Uterus (tissue), 4 donors: ENCODE measurements at regions of chr18 and their contacts with region 1.

Region 1: DNA sequence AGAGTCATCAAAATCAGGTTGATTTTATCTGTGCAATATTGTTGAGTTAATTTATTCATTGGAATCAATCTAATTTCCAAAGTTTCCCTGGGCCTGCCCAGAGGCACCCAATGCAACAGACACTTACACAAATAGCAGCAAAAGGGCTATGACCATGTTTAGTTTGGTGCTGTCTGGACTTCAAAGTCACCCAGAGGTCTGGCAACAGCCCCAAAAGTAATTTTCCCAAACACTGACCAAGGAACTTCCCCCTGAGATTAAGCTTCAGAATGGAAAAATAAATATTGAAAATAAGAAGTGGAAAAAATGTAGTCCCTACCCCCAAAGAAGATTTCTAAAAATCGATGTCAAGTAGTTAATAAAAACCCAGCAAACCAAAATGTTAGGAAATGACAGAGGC is 70.9 kb upstream of the RNF152 start:
- DNase-seq: no peak
- H3K4me3 ChIP-seq: no peak overlapping the region
- H3K27ac ChIP-seq: peak overlapping the region; percentile 36 to 47
- H3K4me1 ChIP-seq: peaks cover 10 to 12% of the 10 kb centered on the region in 2 donors
- H3K27me3 ChIP-seq: no peaks in the 10 kb centered on the region
- CTCF ChIP-seq: no peak
- POLR2A ChIP-seq: no peak

Region 2: DNA sequence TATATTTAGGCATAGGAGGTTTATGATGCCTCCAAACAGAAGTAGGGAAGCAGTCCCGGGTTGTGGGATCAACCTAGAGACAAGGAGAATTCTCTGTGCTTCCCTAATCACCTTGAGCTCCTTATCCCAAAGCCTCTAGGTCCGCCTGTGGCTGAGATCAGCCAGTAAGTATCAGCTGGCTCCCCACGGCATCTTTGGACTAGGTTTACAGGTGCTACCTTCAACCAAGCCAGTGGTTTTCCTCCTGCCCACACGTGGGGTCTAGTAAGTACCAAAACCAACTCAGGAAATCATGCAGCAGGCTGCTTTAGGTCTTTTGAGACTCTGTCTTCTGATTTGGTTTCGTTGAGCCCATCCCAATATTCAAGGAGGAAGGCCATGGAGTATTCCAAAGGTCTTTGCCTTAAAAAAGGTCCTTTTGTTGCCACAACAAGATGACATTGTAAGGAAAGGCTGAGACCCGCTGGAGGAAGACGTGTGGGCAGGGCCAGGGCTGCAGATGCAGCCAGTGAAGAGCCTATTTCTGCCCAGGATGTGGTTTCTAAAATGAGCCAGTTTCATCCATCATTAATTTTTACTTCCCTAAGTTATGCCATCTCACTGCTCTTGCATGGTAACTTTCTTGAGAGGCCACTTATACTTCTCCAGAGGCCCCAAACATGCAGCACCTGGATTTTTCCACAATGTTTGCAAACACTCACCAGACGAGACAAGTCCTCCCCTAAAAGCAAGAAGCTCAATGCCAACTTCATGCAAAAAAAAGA is 319.6 kb before region 1 on chr18:
- intact Hi-C with region 1: no loop called
- DNase-seq: no peak
- H3K4me3 ChIP-seq: no peak overlapping the region
- H3K27ac ChIP-seq: no peak overlapping the region
- H3K4me1 ChIP-seq: no peaks in the 10 kb centered on the region
- H3K27me3 ChIP-seq: no peaks in the 10 kb centered on the region
- CTCF ChIP-seq: no peak
- POLR2A ChIP-seq: no peak

Region 3: GRCh38 chr18:61669320-61669719 is 294.4 kb before region 1 on chr18:
- intact Hi-C with region 1: no loop called
- DNase-seq: no peak
- H3K4me3 ChIP-seq: no peak overlapping the region
- H3K27ac ChIP-seq: no peak overlapping the region
- H3K4me1 ChIP-seq: no peaks in the 10 kb centered on the region
- H3K27me3 ChIP-seq: no peaks in the 10 kb centered on the region
- CTCF ChIP-seq: no peak
- POLR2A ChIP-seq: no peak

Region 4: GRCh38 chr18:61825386-61825785 is 138.3 kb before region 1 on chr18:
- intact Hi-C with region 1: no loop called
- DNase-seq: no peak
- H3K4me3 ChIP-seq: no peak overlapping the region
- H3K27ac ChIP-seq: no peak overlapping the region
- H3K4me1 ChIP-seq: no peaks in the 10 kb centered on the region
- H3K27me3 ChIP-seq: no peaks in the 10 kb centered on the region
- CTCF ChIP-seq: no peak
- POLR2A ChIP-seq: no peak

Region 5: GRCh38 chr18:62018034-62018758 is 54.5 kb after region 1 on chr18:
- intact Hi-C with region 1: loop called (anchors 10 kb)
- DNase-seq: peak; percentile 83 to 89
- H3K4me3 ChIP-seq: no peak overlapping the region
- H3K27ac ChIP-seq: peak overlapping the region; percentile 74 to 75
- H3K4me1 ChIP-seq: peaks cover 15 to 17% of the 10 kb centered on the region in 2 donors
- H3K27me3 ChIP-seq: no peaks in the 10 kb centered on the region
- CTCF ChIP-seq: no peak
- POLR2A ChIP-seq: no peak